SK-N-SH (cell line): ENCODE measurements at regions of chr7 and their contacts with region 1.

Region 1: GRCh38 chr7:37234928-37235327 is 213.7 kb downstream of the ELMO1 start:
- DNase-seq: peak; percentile 54
- H3K4me3 ChIP-seq: no peak overlapping the region
- H3K27ac ChIP-seq: no peak overlapping the region
- H3K4me1 ChIP-seq: peaks cover 0 to 13% of the 10 kb centered on the region in 2 experiments; a peak in 2 of 4 replicates
- H3K27me3 ChIP-seq: no peaks in the 10 kb centered on the region
- CTCF ChIP-seq: peak; percentile 46
- EP300 ChIP-seq: no peak
- RAD21 ChIP-seq: peak; percentile 96

Region 2: DNA sequence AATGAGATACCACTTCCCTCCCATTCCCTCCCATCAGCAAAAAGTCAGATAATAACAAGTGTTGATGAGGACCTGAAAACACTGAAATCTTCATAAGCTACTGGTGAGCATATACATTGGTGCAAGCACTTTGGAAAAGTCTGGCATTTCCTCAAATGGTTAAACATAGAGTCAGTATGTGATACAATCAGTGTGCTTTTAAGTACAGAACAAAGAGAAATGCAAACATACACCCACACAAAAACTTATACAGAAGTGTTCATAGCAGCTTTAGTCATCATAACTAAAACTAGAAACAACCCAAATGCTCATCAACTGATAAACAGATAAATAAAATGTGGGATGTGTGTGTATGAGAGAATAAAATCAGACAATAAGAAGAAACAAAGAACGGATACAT is 48.2 kb before region 1 on chr7:
- CTCF ChIA-PET with region 1: no interaction called
- POLR2A ChIA-PET with region 1: no interaction called
- DNase-seq: no peak
- H3K4me3 ChIP-seq: no peak overlapping the region
- H3K27ac ChIP-seq: no peak overlapping the region
- H3K4me1 ChIP-seq: no peaks in the 10 kb centered on the region; a peak in 1 of 4 replicates
- H3K27me3 ChIP-seq: no peaks in the 10 kb centered on the region
- CTCF ChIP-seq: no peak
- EP300 ChIP-seq: no peak
- RAD21 ChIP-seq: no peak

Region 3: GRCh38 chr7:37247861-37248260 is 12.9 kb after region 1 on chr7:
- CTCF ChIA-PET with region 1: interaction called, 17 read pairs
- POLR2A ChIA-PET with region 1: no interaction called
- DNase-seq: no peak
- H3K4me3 ChIP-seq: no peak overlapping the region
- H3K27ac ChIP-seq: no peak overlapping the region
- H3K4me1 ChIP-seq: no peaks in the 10 kb centered on the region
- H3K27me3 ChIP-seq: no peaks in the 10 kb centered on the region
- CTCF ChIP-seq: no peak
- EP300 ChIP-seq: no peak
- RAD21 ChIP-seq: no peak

Region 4: GRCh38 chr7:37428681-37429434 is 193.9 kb after region 1 on chr7:
- CTCF ChIA-PET with region 1: no interaction called
- POLR2A ChIA-PET with region 1: no interaction called
- DNase-seq: no peak
- H3K4me3 ChIP-seq: no peak overlapping the region
- H3K27ac ChIP-seq: no peak overlapping the region
- H3K4me1 ChIP-seq: peaks cover 0 to 4% of the 10 kb centered on the region in 2 experiments; a peak in 2 of 4 replicates
- H3K27me3 ChIP-seq: no peaks in the 10 kb centered on the region
- CTCF ChIP-seq: no peak
- EP300 ChIP-seq: no peak
- RAD21 ChIP-seq: no peak

Region 5: DNA sequence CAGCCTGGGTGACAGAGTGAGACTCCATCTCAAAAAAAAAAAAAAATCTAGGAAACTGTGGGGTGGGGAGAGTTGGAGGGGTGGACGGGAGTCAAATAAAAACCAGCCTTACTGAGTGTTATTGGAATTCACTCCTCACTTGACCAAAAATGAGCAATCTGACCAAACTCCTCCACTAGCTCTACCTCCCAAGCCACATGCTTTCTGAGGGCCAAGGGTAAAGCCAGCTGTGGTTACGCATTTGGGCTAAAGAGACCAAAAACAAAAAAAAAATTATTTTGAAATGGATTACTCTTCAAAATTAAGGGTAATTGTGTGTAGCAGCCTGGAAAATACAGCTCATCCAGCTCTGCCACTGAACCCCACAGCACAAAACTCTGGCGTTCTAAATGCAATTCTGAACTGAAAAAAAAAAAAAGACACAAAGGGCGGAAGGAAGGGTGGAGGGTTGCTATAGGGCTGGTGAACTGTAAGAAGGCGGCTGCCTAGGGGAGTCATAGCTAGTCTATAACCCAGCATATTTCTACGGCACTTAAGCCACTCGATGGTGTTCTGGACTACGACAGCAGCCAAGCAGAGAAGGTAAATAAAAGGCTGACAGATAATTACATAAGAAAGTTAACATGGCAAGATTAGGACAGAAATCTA is 205.9 kb after region 1 on chr7:
- CTCF ChIA-PET with region 1: interaction called, 13 read pairs
- POLR2A ChIA-PET with region 1: no interaction called
- DNase-seq: peak; percentile 50
- H3K4me3 ChIP-seq: no peak overlapping the region
- H3K27ac ChIP-seq: no peak overlapping the region
- H3K4me1 ChIP-seq: peaks cover 0 to 7% of the 10 kb centered on the region in 2 experiments; a peak in 2 of 4 replicates
- H3K27me3 ChIP-seq: no peaks in the 10 kb centered on the region
- CTCF ChIP-seq: no peak
- EP300 ChIP-seq: no peak
- RAD21 ChIP-seq: no peak

Region 6: GRCh38 chr7:37510043-37510634 is 275.2 kb after region 1 on chr7:
- CTCF ChIA-PET with region 1: interaction called, 89 read pairs
- POLR2A ChIA-PET with region 1: no interaction called
- DNase-seq: peak; percentile 40
- H3K4me3 ChIP-seq: no peak overlapping the region
- H3K27ac ChIP-seq: no peak overlapping the region
- H3K4me1 ChIP-seq: no peaks in the 10 kb centered on the region; a peak in 1 of 4 replicates
- H3K27me3 ChIP-seq: no peaks in the 10 kb centered on the region
- CTCF ChIP-seq: peak; percentile 34
- EP300 ChIP-seq: no peak
- RAD21 ChIP-seq: peak; percentile 80

Region 7: DNA sequence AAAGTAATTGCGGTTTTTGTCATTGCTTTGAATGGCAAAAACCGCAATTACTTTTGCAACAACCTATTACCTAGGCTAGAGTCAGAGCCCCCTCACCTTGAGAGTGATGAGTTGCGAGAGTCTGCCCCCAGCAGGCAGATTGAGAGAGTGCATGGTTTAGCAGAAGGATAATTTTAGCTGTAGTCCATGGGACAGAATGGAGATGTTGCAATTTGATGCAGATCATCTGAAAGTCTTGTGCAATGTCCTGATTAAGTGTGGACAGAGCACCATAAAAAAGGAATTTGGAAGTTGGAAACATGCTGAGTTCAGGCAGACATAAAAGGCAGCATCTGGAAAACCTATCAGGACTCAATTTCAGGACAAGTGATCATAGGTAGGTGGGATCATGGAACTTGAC is 497.3 kb after region 1 on chr7:
- CTCF ChIA-PET with region 1: interaction called, 30 read pairs
- POLR2A ChIA-PET with region 1: no interaction called
- DNase-seq: peak; percentile 51
- H3K4me3 ChIP-seq: no peak overlapping the region
- H3K27ac ChIP-seq: no peak overlapping the region
- H3K4me1 ChIP-seq: no peaks in the 10 kb centered on the region
- H3K27me3 ChIP-seq: no peaks in the 10 kb centered on the region
- CTCF ChIP-seq: no peak
- EP300 ChIP-seq: no peak
- RAD21 ChIP-seq: peak; percentile 67

Region 8: GRCh38 chr7:38127216-38128207 is 892.6 kb after region 1 on chr7:
- CTCF ChIA-PET with region 1: no interaction called
- POLR2A ChIA-PET with region 1: no interaction called
- DNase-seq: no peak
- H3K4me3 ChIP-seq: no peak overlapping the region
- H3K27ac ChIP-seq: no peak overlapping the region
- H3K4me1 ChIP-seq: no peaks in the 10 kb centered on the region
- H3K27me3 ChIP-seq: no peaks in the 10 kb centered on the region; the same call in 1 of the 2 replicates
- CTCF ChIP-seq: no peak
- EP300 ChIP-seq: no peak
- RAD21 ChIP-seq: no peak